Mammary epithelial cell (primary cell): ENCODE measurements at regions of chr4 and their contacts with region 1.

Region 1: GRCh38 chr4:87093443-87094123 is 126.8 kb downstream of the KLHL8 start:
- DNase-seq: peak; percentile 89
- H3K4me3 ChIP-seq: no peak overlapping the region
- H3K27ac ChIP-seq: peak overlapping the region; percentile 97
- H3K4me1 ChIP-seq: peaks cover 24% of the 10 kb centered on the region
- H3K27me3 ChIP-seq: no peaks in the 10 kb centered on the region
- CTCF ChIP-seq: peak; percentile 26 to 58

Region 2: DNA sequence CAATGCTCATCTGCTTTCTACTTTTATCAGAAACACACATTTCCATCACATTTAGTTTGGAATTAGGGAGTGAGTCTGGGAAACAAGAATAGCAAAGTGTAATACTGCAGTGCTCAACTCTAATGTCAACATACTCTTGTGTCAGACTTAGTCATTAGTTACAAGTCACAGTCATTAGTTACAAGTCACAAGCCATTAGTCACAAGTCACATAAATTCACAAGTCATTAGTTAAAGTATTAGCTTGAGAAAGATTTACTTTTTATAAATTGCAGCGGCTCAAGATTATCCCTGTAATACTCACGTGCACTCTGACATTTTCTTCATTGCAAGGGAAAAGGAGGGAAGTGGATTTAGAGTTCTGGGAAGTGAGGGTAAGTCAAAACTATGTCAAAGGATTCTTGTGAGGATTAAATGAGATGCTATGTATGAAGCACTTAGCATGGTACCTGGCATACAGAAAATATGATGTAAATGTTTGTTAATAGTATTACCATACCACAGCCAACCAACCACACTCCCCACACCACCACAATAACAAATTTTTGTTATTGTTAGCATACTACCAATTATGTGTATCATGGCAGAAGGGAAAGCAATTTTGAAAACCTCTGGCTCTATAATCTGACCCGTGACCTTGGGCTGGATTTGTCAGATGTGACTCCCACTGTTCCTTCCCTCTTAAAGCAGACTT is 1502.0 kb before region 1 on chr4:
- CTCF ChIA-PET with region 1: no interaction called
- dilution Hi-C with region 1: no loop called
- in situ Hi-C with region 1: no loop called
- intact Hi-C with region 1: no loop called
- DNase-seq: no peak
- H3K4me3 ChIP-seq: no peak overlapping the region
- H3K27ac ChIP-seq: no peak overlapping the region
- H3K4me1 ChIP-seq: no peaks in the 10 kb centered on the region
- H3K27me3 ChIP-seq: no peaks in the 10 kb centered on the region
- CTCF ChIP-seq: no peak

Region 3: GRCh38 chr4:86497980-86498862 is 595.4 kb before region 1 on chr4:
- CTCF ChIA-PET with region 1: no interaction called
- dilution Hi-C with region 1: no loop called
- in situ Hi-C with region 1: no loop called
- intact Hi-C with region 1: loop called (anchors 1 kb)
- DNase-seq: peak; percentile 40
- H3K4me3 ChIP-seq: no peak overlapping the region
- H3K27ac ChIP-seq: no peak overlapping the region
- H3K4me1 ChIP-seq: peaks cover 26% of the 10 kb centered on the region
- H3K27me3 ChIP-seq: no peaks in the 10 kb centered on the region
- CTCF ChIP-seq: peak; percentile 78 to 89

Region 4: GRCh38 chr4:86927843-86928395 is 165.7 kb before region 1 on chr4:
- CTCF ChIA-PET with region 1: interaction called, 13 read pairs
- dilution Hi-C with region 1: no loop called
- in situ Hi-C with region 1: loop called (anchors 10 kb)
- intact Hi-C with region 1: loop called (anchors 1 kb)
- DNase-seq: peak; percentile 99
- H3K4me3 ChIP-seq: no peak overlapping the region
- H3K27ac ChIP-seq: peak overlapping the region; percentile 97
- H3K4me1 ChIP-seq: peaks cover 43% of the 10 kb centered on the region
- H3K27me3 ChIP-seq: no peaks in the 10 kb centered on the region
- CTCF ChIP-seq: no peak

Region 5: GRCh38 chr4:87038837-87039615 is 54.6 kb before region 1 on chr4:
- CTCF ChIA-PET with region 1: no interaction called
- dilution Hi-C with region 1: no loop called
- in situ Hi-C with region 1: no loop called
- intact Hi-C with region 1: loop called (anchors 5 kb)
- DNase-seq: peak; percentile 89
- H3K4me3 ChIP-seq: peak overlapping the region in 1 of 3 experiments; percentile 2
- H3K27ac ChIP-seq: peak overlapping the region; percentile 89
- H3K4me1 ChIP-seq: peaks cover 42% of the 10 kb centered on the region
- H3K27me3 ChIP-seq: no peaks in the 10 kb centered on the region
- CTCF ChIP-seq: no peak

Region 6: DNA sequence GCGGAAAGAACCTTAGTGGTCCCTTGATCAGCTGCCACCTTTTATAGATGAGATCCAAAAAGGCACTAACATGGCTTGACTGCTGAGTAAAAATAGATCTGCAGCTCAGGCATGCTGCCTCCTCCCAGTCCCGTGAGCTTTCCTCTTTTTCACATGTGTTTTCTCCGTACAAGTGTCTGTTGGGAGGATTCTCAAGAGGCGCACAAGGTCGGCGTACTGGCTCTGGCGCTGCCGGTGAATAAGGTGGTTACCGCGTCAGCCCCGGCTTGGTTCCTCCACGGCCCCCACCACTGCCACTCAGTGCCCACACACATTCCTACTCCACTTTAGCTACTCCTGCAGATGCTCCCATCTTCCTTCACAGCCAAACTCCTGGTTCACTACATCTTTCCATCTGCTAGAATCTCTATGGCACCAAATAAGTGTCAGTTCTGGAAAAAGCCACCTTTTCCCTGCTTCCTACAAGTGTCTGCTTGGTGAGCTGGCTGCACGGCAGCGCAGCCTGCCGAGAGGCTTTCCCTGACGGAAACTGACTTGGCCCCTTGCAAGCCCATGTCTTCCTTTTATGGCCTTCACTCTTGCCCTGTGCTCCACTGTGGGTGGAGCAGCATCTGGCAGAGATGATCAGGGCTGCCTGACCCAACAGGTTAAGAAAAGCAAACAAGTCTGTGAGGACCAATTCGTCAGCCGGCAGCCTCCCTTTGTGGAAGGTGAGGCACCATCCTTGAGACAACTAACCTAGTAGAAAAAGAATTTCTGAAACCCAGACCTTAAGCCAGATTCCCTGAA is 27.0 kb after region 1 on chr4:
- CTCF ChIA-PET with region 1: no interaction called
- dilution Hi-C with region 1: no loop called
- in situ Hi-C with region 1: no loop called
- intact Hi-C with region 1: loop called (anchors 1 kb)
- DNase-seq: peak; percentile 97
- H3K4me3 ChIP-seq: peak overlapping the region; percentile 13 to 42 (median 40)
- H3K27ac ChIP-seq: peak overlapping the region; percentile 96
- H3K4me1 ChIP-seq: peaks cover 40% of the 10 kb centered on the region
- H3K27me3 ChIP-seq: no peaks in the 10 kb centered on the region
- CTCF ChIP-seq: peak in 1 of 2 donors; percentile 42